ENCODE measurements at regions of chr3 and their contacts with region 1.

Region 1: DNA sequence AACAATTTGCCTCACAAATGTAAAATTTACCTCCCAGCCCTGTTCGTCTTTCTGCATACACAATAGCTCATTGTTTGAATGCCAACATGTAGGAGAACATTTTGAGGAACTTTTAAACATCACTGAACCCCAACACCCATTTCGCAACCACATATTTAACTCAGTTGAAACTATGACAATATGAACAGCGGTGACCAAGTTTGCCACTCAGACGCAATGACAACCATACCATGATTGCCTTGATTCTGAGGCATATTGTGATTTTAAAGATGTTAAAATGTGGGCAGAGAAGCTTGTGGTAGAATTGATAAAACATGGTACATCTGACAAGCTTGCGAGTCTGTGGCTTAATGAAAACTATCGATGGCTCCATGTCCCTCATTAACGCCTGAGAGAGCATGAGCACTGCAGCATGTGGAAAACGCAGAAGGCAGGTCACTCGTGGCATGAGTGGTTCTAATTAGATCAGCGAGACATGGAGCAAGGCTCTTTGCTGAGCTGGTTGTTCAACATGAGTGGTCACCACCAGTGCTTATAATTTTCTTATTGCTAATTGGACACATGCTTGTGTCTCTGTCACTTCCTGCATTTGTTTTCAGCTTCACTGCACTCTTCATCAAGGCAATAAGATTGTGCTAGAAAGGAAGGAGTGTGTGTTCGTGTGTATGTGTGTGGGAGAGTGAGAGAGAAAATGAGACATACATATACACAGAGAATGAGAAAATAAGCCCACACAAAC is 116.8 kb downstream of the CHST2 start:
- DNase-seq: no peak
- H3K4me3 ChIP-seq: no peak overlapping the region
- H3K27ac ChIP-seq: no peak overlapping the region
- H3K27me3 ChIP-seq: peaks cover 3% of the 10 kb centered on the region
- CTCF ChIP-seq: no peak

Region 2: DNA sequence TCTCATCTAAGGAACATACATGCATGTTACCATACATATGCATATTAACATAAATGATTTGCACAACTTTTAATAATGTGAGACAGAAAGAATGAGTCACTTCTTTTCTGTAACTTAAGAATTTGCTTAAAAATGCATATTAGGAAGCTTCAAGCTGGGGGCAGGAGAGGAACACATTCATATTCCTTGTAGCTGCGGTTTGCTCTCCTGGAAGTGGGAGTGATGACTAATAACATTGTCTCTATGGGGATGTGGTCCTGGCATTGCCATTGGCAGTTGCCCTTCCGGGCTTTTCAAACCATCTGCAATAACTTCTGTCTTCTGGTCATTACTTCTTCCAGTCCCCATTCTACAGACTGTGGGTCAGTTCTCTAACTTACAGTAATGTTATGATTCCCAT is 101.2 kb before region 1 on chr3:
- CTCF ChIA-PET with region 1: no interaction called
- POLR2A ChIA-PET with region 1: interaction called, 12 read pairs
- DNase-seq: peak; percentile 79
- H3K4me3 ChIP-seq: no peak overlapping the region
- H3K27ac ChIP-seq: no peak overlapping the region
- H3K27me3 ChIP-seq: no peaks in the 10 kb centered on the region
- CTCF ChIP-seq: no peak